ENCODE measurements at regions of chr6 and their contacts with region 1.

Region 1: DNA sequence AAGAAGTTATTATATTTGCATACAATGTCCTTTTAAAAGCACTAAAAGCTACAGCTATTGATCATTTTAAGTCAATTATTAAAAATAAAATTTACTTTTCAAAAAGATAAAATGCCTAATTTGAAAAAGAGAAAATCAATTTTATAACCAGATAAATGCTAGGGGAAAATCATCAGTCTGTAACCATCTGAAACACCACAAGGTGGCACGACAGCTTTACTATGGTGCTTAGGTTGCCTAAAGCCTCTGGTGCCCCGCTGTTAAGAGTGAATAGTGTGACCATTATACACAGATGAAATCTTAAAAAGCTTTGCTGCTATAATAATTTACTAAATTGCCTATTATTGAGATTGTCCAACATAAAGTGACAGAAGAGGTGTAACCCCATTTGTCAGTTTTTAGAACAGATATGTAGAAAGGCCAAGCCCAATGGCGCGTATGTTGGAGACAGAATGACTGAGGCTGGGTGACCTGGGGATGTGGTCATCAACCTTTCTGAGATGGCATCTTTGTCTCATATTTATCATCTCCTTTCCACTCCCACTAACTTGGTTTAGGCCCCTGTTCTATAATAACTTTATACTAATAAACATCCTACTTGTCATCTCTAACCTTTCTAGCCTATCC is 100.8 kb downstream of the MOXD1 start:
- DNase-seq: peak; percentile 58
- H3K4me3 Mint-ChIP-seq: no peak overlapping the region
- H3K27ac Mint-ChIP-seq: no peak overlapping the region
- H3K4me1 Mint-ChIP-seq: no peaks in the 10 kb centered on the region
- H3K27me3 Mint-ChIP-seq: no peaks in the 10 kb centered on the region
- CTCF ChIP-seq: peak; percentile 57

Region 2: DNA sequence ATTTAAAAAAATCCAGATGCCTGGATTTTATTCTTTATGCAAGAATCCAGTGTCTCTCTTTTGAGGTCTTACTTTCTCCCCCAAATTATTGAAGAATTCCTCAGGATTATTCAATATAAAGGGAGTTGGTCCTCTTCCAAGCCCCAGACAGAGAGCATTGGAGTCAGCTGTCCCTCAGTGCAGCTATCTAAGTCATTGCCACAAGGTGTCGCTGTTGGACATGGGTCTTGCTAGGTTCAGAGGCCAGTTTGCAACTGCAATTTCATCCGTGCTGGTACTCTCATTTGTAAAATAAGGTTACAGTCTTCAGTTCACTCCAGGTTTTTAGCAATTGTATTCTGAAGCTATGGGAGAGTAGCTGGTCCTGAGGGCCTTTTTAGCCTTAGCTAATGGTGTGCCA is 377.1 kb before region 1 on chr6:
- CTCF ChIA-PET with region 1: interaction called, 5 read pairs
- intact Hi-C with region 1: loop called (anchors 1 kb)
- DNase-seq: peak; percentile 61
- H3K4me3 Mint-ChIP-seq: no peak overlapping the region
- H3K27ac Mint-ChIP-seq: no peak overlapping the region
- H3K4me1 Mint-ChIP-seq: no peaks in the 10 kb centered on the region
- H3K27me3 Mint-ChIP-seq: no peaks in the 10 kb centered on the region
- CTCF ChIP-seq: peak; percentile 62

Region 3: DNA sequence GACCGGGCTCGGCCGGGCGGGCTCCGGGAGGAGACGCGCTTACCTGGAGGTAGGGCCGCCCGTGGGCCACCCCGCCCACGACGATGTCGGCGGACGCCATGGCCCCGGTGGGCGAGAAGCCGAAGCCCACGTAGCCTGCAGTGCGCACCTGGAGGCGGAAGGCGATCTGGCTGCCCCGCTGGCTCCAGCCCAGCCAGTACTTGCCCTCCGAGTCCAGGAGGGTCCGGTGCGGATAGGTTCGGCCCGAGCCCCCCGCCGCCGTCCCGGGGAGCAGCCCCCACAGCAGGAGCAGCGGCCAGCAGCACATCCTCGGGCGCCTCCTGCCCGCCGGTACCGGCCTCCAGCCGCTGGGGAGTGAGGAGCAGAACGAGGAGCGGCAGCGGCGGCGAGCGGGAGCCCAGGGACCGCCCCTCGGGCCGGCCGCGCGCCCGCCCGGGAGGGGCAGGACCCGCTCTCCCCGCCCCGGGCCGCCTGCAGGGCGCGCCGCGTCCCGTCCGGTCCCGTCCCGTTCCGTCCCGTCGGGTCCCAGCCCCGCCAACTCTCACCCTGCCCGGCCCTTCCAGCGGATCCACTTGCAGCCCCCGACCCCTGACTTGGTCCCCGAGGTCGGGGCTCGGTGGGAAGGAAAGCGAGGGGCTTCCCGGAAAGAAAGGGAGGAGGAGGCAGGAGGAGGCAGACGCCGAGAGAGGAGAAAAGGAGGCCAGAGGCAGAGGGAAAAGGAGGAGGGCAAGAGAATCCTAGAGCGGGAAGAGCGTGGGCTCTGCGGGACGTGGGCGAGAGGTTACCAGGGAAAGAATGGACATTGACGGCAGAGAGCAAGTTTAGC is 100.9 kb after region 1 on chr6 and contains the start of gene MOXD1:
- CTCF ChIA-PET with region 1: no interaction called
- intact Hi-C with region 1: no loop called
- DNase-seq: peak; percentile 79
- H3K4me3 Mint-ChIP-seq: peak within 1 kb of the TSS; percentile 69
- H3K27ac Mint-ChIP-seq: no peak within 1 kb of the TSS
- H3K4me1 Mint-ChIP-seq: peaks cover 13% of the 10 kb centered on the region
- H3K27me3 Mint-ChIP-seq: peaks cover 23% of the 10 kb centered on the region
- CTCF ChIP-seq: no peak
- total RNA-seq, gene MOXD1: 13.2 and 13.6 TPM in 2 replicates

Region 4: DNA sequence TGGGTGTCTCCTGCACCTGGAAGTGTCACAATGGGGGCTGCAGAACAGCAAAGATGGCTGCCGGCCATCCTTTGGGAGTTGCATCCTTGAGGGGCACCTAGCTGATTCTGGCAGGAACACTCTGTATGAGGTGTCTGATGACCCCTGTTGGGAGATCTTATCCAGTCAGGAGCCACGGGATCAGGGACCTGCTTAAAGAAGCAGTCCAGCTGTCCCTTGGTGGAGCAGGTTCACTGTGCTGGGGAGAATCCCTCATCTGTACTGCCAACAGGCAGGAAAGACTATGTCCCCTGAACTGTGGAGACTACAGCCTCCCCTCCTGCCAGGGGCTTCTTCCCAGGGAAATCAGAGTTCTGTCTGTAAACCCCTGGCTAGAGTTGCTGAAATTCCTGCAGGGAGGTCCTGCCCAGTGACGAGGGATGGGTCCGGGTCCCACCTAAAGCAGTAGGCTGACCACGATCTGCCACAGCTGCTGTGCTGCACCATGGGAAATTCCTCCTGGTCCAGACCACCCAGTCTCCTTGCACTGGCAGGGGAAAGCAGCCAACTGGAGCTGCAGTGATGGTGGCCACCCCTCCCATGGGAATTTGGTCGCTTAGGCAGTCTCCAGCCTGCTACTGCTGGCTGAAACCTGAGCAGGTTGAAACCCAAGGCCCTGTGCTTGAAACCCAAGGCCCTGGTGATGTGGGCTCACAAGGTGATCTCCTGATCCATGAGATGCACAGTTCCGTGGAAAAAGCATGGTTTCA is 124.6 kb after region 1 on chr6:
- CTCF ChIA-PET with region 1: no interaction called
- intact Hi-C with region 1: no loop called
- DNase-seq: no peak
- H3K4me3 Mint-ChIP-seq: no peak overlapping the region
- H3K27ac Mint-ChIP-seq: no peak overlapping the region
- H3K4me1 Mint-ChIP-seq: no peaks in the 10 kb centered on the region
- H3K27me3 Mint-ChIP-seq: no peaks in the 10 kb centered on the region
- CTCF ChIP-seq: no peak

Region 5: GRCh38 chr6:132483779-132484679 is 183.6 kb after region 1 on chr6:
- CTCF ChIA-PET with region 1: interaction called, 17 read pairs
- intact Hi-C with region 1: loop called (anchors 1 kb)
- DNase-seq: peak; percentile 46
- H3K4me3 Mint-ChIP-seq: no peak overlapping the region
- H3K27ac Mint-ChIP-seq: no peak overlapping the region
- H3K4me1 Mint-ChIP-seq: no peaks in the 10 kb centered on the region
- H3K27me3 Mint-ChIP-seq: no peaks in the 10 kb centered on the region
- CTCF ChIP-seq: peak; percentile 74

Measured in Calu3 (cell line).